A673 (cell line): ENCODE measurements at regions of chr20 and their contacts with region 1.

Region 1: GRCh38 chr20:45373353-45374100 is 4.6 kb downstream of the TP53TG5 start:
- DNase-seq: peak; percentile 94
- H3K4me3 ChIP-seq: peak overlapping the region; percentile 52
- H3K27ac ChIP-seq: no peak overlapping the region
- H3K4me1 ChIP-seq: no peaks in the 10 kb centered on the region
- H3K27me3 ChIP-seq: no peaks in the 10 kb centered on the region
- CTCF ChIP-seq: peak; percentile 98

Region 2: GRCh38 chr20:44516491-44516890 is 857.0 kb before region 1 on chr20:
- CTCF ChIA-PET with region 1: no interaction called
- POLR2A ChIA-PET with region 1: no interaction called
- intact Hi-C with region 1: no loop called
- DNase-seq: no peak
- H3K4me3 ChIP-seq: no peak overlapping the region
- H3K27ac ChIP-seq: no peak overlapping the region
- H3K4me1 ChIP-seq: peaks cover 7% of the 10 kb centered on the region
- H3K27me3 ChIP-seq: no peaks in the 10 kb centered on the region
- CTCF ChIP-seq: no peak

Region 3: DNA sequence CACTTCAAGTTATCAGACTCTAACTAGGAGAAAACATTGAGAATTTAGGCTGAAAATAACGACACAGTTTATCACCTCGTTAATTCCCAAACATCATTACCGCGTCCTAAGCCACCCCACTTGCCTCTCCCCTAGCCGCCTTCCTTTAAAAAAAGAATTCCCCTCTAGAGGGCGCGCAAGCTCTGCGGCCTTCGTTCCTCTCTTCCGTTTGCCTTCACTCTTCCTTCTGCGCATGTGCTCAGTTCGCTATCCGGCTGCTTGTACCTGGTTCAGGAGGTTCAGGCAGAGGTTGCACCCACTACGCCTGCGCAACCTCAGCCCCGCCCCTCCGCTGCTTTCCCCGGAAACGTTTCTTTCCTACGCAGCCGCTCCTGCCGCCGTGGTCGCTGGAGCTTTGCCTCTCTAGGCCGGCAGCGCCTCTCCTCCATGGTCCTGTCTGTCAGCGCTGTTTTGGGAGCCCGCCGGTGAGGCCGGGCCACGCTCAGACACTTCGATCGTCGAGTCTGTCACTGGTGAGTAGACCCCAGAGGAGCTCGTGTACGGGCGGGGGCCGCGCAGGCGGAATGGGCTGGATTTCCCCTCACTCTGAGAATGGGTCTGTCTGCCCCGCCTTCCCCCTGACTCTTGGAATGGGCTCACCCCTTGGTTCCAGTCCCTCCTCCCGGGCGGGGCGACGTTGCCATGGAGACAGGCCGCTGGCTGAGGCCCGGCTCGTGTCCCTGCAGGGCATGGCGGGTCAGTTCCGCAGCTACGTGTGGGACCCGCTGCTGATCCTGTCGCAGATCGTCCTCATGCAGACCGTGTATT is 10.5 kb before region 1 on chr20 and contains the start of gene SYS1:
- CTCF ChIA-PET with region 1: interaction called, 24 read pairs
- POLR2A ChIA-PET with region 1: no interaction called
- intact Hi-C with region 1: no loop called
- DNase-seq: peak; percentile 99
- H3K4me3 ChIP-seq: peak within 1 kb of the TSS; percentile 65
- H3K27ac ChIP-seq: peak within 1 kb of the TSS; percentile 93
- H3K4me1 ChIP-seq: peaks cover 15% of the 10 kb centered on the region
- H3K27me3 ChIP-seq: no peaks in the 10 kb centered on the region
- CTCF ChIP-seq: peak; percentile 92
- total RNA-seq, gene SYS1: 20.0 and 22.8 TPM in 2 replicates

Region 4: DNA sequence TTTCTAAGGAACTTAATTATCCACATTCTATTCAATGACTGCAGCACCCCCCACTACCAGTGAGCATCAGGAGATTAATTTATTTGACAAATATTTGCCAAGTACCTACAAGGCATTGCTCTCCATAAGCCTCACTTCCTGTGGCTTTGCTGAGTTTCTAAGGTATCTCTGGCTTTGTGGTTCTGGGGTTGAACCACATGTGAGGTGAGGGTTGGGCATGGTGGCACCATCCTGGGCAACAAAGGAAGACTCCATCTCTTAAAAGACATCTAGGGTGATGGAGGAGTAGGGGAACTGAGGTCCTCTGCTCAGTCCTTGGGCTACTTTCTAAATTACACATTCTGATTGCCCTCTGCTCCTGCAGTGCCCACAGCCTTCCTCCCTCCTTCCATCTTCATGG is 70.5 kb after region 1 on chr20:
- CTCF ChIA-PET with region 1: no interaction called
- POLR2A ChIA-PET with region 1: interaction called, 12 read pairs
- intact Hi-C with region 1: no loop called
- DNase-seq: no peak
- H3K4me3 ChIP-seq: no peak overlapping the region
- H3K27ac ChIP-seq: no peak overlapping the region
- H3K4me1 ChIP-seq: no peaks in the 10 kb centered on the region
- H3K27me3 ChIP-seq: peaks cover 3% of the 10 kb centered on the region
- CTCF ChIP-seq: no peak

Region 5: DNA sequence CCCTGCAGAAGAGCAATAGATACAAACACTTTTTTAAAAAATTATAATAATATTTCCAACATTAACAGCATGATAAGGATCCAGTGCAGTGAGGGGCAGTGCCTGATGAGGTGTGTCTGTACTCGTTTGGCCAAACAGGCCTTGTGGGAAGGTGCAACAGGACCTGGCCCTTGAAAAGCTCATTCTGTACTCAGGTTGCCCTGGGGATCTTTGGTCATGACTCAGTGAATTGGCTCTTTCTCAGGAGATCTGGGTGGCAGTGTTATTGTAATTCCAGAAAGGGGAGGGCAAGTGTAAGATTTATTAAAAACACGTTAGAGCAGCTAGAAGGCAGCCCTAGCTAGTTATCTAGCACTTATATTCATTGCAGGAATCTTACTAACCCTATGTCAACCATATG is 144.8 kb after region 1 on chr20:
- CTCF ChIA-PET with region 1: no interaction called
- POLR2A ChIA-PET with region 1: no interaction called
- intact Hi-C with region 1: no loop called
- DNase-seq: no peak
- H3K4me3 ChIP-seq: no peak overlapping the region
- H3K27ac ChIP-seq: no peak overlapping the region
- H3K4me1 ChIP-seq: no peaks in the 10 kb centered on the region
- H3K27me3 ChIP-seq: peaks cover 13% of the 10 kb centered on the region
- CTCF ChIP-seq: no peak